Left ventricle myocardium superior (tissue), 1 donor: ENCODE measurements at regions of chr16 and their contacts with region 1.

Region 1: DNA sequence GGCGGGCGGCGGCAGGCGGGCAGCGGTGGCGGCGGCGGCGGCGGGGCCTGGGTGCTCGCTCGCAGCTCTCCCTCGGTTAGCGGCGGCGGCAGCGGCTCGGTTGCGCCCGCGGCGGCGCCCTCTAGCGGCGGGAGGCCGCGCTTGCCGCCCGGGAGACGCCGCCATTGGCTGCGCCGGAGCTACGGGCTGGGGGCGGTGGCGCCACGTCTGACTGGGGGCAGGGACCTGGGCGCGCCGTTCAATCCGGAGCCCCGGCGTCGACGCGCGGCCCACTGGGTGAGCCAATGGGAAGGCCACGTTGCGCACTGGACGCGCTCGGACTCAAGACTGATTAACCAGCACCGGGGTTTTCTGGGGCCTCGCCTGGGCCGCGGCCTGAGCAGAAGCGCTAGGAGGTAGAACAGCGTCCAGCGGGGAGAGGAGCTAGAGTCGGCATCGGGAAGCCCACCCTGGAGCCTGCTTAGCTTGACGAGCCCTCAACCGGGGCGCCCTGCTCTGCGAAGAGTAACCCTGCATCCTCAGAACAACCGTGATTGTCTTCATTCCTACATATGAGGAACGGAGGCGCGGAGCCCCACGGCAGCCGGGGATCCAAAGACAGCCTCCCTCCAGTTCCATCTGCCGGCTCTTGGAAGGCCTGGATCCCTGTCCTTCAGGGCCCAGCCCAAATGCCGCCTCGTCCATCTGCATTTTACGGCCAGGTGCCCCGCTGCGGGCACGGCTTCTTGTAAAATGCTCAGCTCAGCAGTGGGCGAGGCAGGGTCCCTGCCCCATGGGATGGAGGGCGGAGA is at the start of gene ZC3H7A:
- DNase-seq: peak; percentile 99
- ATAC-seq: peak; percentile 98
- total RNA-seq, gene ZC3H7A: 24.5 TPM

Region 2: DNA sequence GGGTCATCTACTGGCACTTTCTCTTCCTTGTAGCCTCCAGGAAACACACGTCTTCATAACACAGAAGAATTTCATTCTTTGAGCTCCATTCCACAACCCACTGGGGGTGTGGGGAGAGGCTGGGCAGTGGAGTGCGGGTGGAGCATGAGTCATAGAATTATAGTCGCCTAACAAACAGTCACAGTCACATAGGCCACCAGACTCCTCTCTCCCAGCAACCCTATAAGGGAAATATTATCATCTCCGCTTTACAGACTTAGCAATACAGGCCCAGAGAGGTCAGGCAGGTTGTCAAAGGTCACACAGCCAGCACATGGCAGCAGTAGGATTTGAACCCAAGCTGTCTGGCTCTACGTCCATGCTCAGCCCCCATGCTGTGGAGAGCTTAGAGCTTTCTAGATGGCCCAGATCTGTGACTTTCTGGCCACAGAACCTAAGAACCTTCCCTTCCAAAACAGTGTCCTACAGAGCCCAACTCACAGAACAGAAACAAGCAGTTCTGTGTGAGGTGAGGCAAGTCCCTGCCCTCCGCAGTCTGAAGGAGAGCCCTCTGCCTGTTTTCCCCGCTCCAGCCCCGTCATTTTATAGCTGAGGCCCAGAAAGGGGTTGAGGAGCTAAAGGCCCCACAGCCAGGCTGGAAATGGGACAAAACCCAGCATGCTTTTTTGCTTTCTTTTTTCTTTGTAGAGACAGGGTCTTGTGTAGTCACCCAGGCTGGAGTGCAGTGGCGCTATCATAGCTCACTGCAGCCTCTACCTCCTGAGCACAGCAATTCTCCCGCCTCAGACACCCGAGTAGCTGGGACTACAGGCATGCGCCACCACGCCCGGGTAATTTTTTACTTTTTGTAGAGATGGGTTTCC is 199.9 kb before region 1 on chr16:
- intact Hi-C with region 1: no loop called
- DNase-seq: no peak
- ATAC-seq: peak; percentile 40

Region 3: GRCh38 chr16:11667824-11668622 is 129.3 kb before region 1 on chr16 and contains the start of gene SNN:
- intact Hi-C with region 1: no loop called
- DNase-seq: peak; percentile 95
- ATAC-seq: peak; percentile 93
- total RNA-seq, gene SNN: 22.4 TPM

Region 4: GRCh38 chr16:11742539-11743307 is 54.6 kb before region 1 on chr16 and contains the start of gene TXNDC11:
- intact Hi-C with region 1: loop called (anchors 10 kb)
- DNase-seq: peak; percentile 100
- ATAC-seq: peak; percentile 97
- total RNA-seq, gene TXNDC11: 20.8 TPM